H1 (cell line): ENCODE measurements at regions of chr5 and their contacts with region 1.

Region 1: DNA sequence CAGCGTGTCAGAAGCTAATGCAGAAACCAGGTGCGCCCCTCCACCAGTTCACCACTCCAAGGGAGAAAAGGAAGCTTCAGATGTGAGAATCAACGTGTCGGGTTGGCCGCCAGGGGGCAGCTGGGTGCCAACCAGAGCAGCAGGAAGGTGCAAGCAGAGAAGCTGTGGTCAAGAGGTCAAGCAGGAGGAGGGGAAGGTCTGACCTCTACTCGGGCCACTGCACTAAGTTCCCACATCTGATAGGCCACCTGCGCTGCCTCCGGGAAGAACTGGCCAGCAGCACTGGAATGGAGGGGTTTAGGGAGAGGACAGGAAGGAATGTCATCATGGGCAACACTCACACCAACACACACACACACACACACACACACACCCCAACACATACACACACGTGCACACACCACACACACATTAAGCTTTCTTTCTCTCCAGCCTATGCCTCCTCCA is 31.4 kb downstream of the ANXA6 start:
- DNase-seq: peak; percentile 29 to 85
- H3K4me3 ChIP-seq: no peak overlapping the region
- H3K27ac ChIP-seq: no peak overlapping the region
- H3K4me1 ChIP-seq: peaks cover 0 to 3% (median 0%) of the 10 kb centered on the region in 4 experiments; a peak in 3 of 7 replicates
- H3K27me3 ChIP-seq: no peaks in the 10 kb centered on the region
- CTCF ChIP-seq: peak; percentile 85 to 94 (median 87)
- EP300 ChIP-seq: no peak
- POLR2A ChIP-seq: no peak
- RAD21 ChIP-seq: peak; percentile 85 to 90

Region 2: DNA sequence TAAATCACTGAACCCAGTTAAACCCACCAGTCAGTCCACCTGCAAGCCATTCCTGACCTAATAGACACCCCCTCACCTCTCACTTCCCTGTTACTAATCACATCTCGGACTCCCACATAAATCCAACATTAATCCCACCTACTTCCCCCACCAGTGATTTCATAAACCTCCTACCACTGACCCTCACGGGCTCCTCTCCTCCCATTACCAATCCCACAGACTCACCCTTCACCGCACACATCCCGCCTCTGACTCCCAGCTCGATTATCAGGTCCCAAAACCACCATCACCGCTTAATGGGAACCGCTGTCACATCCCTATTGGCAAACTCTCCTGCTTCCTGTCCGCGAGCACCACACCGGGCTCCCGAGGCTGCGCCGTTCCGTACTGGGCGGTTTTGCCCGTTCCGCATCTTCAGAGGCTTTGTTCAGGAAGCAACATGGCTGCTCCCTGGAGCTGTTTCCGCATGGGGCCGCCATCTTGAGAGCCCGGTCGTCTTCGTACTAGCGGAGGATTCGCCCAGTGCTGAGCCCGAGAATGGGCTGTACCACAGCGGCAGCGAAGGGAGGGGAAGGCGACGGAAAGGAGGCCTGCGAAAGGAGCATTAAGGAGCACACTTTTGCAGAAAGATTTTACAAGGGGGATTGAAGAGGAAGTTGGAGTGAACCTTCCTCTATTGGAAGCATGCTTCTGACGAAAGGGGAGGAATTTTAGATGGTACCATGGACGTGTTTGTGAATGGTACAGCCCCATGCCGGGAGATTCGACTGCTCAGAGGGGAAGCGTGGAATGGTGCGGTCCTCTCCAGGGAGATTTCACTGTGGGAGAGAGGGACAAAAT is 221.5 kb before region 1 on chr5 and contains the start of gene ZNF300:
- CTCF ChIA-PET with region 1: no interaction called
- POLR2A ChIA-PET with region 1: no interaction called
- DNase-seq: peak; percentile 84 to 85
- H3K4me3 ChIP-seq: peak within 1 kb of the TSS; percentile 71 to 91 (median 76)
- H3K27ac ChIP-seq: peak within 1 kb of the TSS; percentile 100
- H3K4me1 ChIP-seq: no peaks in the 10 kb centered on the region
- H3K27me3 ChIP-seq: no peaks in the 10 kb centered on the region
- CTCF ChIP-seq: no peak
- EP300 ChIP-seq: peak in 1 of 2 experiments; percentile 99; a peak in 2 of 3 replicates
- POLR2A ChIP-seq: peak in 1 of 2 experiments; percentile 78; a peak in 1 of 3 replicates
- RAD21 ChIP-seq: no peak
- total RNA-seq, gene ZNF300: 15.2 and 15.8 TPM in 2 replicates

Region 3: GRCh38 chr5:151086905-151087360 is 39.3 kb before region 1 on chr5:
- CTCF ChIA-PET with region 1: interaction called, 13 read pairs
- POLR2A ChIA-PET with region 1: no interaction called
- DNase-seq: no peak
- H3K4me3 ChIP-seq: no peak overlapping the region
- H3K27ac ChIP-seq: no peak overlapping the region
- H3K4me1 ChIP-seq: peaks cover 0 to 4% (median 1%) of the 10 kb centered on the region in 4 experiments; a peak in 4 of 7 replicates
- H3K27me3 ChIP-seq: no peaks in the 10 kb centered on the region; a peak in 2 of 7 replicates
- CTCF ChIP-seq: no peak
- EP300 ChIP-seq: no peak
- POLR2A ChIP-seq: no peak
- RAD21 ChIP-seq: no peak

Region 4: DNA sequence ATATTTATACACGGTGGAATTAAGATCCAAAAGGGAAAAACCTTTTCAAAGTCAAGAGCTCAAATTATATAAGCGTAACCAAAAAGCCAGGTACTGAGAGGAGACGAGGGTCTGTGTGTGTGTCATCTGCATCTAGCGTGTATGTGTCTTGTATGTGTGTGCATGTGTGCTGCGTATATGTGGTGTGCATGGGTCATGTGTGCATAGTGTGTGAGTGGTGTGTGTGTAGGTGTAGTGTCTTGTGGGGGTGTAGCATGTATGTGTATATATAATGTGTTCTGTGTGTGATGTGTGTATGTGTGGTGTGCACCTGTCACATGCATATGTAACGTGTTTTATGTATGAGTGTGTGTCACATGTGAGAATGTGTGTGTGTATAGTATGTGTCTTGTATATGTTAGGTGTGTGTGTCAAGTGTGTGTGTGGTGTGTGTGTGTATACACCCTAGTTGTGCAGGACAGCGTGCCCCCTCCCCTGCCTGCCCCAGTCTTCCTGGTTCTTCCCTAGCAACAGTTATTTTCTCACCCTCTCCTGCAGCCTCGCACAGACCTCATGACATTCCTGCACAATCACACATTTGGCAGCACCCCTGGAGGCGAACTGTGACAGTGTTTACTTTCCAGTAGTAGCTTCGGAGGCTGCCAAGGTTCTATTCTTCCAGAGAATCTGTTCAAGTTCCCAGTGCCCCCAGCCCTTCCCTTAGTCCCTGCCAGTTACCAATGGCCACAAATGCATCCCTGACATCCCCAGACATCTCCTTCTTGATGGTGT is 18.3 kb before region 1 on chr5:
- CTCF ChIA-PET with region 1: interaction called, 13 read pairs
- POLR2A ChIA-PET with region 1: no interaction called
- DNase-seq: no peak
- H3K4me3 ChIP-seq: no peak overlapping the region
- H3K27ac ChIP-seq: no peak overlapping the region
- H3K4me1 ChIP-seq: no peaks in the 10 kb centered on the region
- H3K27me3 ChIP-seq: no peaks in the 10 kb centered on the region; a peak in 1 of 7 replicates
- CTCF ChIP-seq: no peak
- EP300 ChIP-seq: no peak
- POLR2A ChIP-seq: no peak
- RAD21 ChIP-seq: no peak

Region 5: GRCh38 chr5:151150471-151151262 is 24.4 kb after region 1 on chr5:
- CTCF ChIA-PET with region 1: interaction called, 810 read pairs
- POLR2A ChIA-PET with region 1: interaction called, 6 read pairs
- DNase-seq: no peak
- H3K4me3 ChIP-seq: no peak overlapping the region
- H3K27ac ChIP-seq: no peak overlapping the region
- H3K4me1 ChIP-seq: peaks cover 0 to 9% (median 4%) of the 10 kb centered on the region in 4 experiments; a peak in 4 of 7 replicates
- H3K27me3 ChIP-seq: no peaks in the 10 kb centered on the region
- CTCF ChIP-seq: no peak
- EP300 ChIP-seq: no peak
- POLR2A ChIP-seq: 0 out of 3 replicates have a peak, but pooled peaks of 1 of the 2 experiments have one; percentile 28
- RAD21 ChIP-seq: no peak

Region 6: GRCh38 chr5:151174612-151175101 is 48.4 kb after region 1 on chr5:
- CTCF ChIA-PET with region 1: interaction called, 810 read pairs
- POLR2A ChIA-PET with region 1: no interaction called
- DNase-seq: no peak
- H3K4me3 ChIP-seq: no peak overlapping the region
- H3K27ac ChIP-seq: no peak overlapping the region
- H3K4me1 ChIP-seq: peaks cover 0 to 11% (median 0%) of the 10 kb centered on the region in 4 experiments; a peak in 1 of 7 replicates
- H3K27me3 ChIP-seq: no peaks in the 10 kb centered on the region
- CTCF ChIP-seq: no peak
- EP300 ChIP-seq: no peak
- POLR2A ChIP-seq: no peak
- RAD21 ChIP-seq: no peak

Region 7: DNA sequence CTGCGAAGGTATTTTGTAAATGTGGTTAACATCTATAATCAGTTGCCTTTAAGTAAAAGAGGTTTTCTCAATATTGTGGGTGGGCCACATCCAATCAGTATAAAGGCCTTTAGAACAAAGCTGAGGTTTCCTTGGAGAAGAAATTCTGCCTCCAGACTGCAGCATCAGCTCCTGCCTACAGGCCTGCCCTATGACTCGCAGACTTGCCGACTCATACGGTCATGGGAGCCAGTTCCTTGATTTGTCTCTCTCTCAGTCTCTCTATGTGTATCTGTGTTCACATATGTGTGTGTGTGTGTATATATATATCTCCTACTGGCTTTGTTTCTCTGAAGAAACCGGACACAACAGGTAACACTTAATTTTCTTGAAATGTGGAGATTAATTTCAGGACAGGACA is 366.5 kb after region 1 on chr5:
- CTCF ChIA-PET with region 1: no interaction called
- POLR2A ChIA-PET with region 1: no interaction called
- DNase-seq: no peak
- H3K4me3 ChIP-seq: no peak overlapping the region
- H3K27ac ChIP-seq: no peak overlapping the region
- H3K4me1 ChIP-seq: peaks cover 0 to 4% (median 0%) of the 10 kb centered on the region in 4 experiments; a peak in 2 of 7 replicates
- H3K27me3 ChIP-seq: no peaks in the 10 kb centered on the region
- CTCF ChIP-seq: no peak
- EP300 ChIP-seq: no peak
- POLR2A ChIP-seq: no peak
- RAD21 ChIP-seq: no peak